Esophagus muscularis mucosa (tissue), 4 donors: ENCODE measurements at regions of chr7 and their contacts with region 1.

Region 1: GRCh38 chr7:873367-874002 is 2.9 kb upstream of the GET4 start:
- DNase-seq: peak; percentile 95
- H3K4me3 ChIP-seq: no peak overlapping the region
- H3K27ac ChIP-seq: peak overlapping the region; percentile 85 to 92 (median 92)
- H3K4me1 ChIP-seq: peaks cover 50 to 74% (median 67%) of the 10 kb centered on the region in 4 donors
- H3K27me3 ChIP-seq: no peaks in the 10 kb centered on the region
- CTCF ChIP-seq: peak in 2 of 3 experiments; percentile 97 to 99
- EP300 ChIP-seq: no peak
- POLR2A ChIP-seq: no peak

Region 2: DNA sequence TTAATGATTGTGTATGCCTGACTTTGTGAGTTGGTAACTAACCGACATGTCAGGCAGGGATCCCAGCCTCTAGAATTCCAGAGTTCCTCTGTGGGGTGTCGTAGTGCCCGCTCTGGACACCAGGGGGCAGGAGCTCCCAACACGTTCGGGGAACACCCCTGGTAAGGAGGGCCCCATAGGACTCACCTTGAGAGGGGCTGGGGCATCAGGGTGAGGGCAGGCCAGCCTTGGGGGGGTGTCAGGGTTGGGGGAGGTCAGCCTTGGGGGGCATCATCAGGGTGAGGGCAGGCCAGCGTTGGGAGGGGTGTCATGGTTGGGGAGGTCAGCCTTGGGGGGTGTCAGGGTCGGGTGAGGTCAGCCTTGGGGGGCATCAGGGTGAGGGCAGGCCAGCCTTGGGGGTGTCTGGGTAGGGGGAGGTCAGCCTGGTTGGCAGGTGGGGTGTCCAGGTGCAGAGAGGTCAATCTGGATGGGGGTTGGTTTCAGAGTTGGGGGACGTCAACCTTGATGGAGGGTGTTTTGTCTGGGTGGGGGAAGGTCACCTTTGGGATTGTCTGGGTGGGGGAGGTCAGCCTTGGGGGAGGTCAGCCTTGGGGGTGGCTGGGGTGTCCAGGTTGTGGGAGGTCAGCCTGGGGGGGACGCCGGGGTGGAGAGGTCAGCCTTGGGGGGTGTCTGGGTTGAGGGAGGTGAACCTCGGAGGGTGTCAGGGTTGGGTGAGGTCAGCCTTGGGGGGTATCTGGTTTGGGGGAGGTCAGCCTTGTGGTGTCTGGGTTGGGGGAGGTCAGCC is 86.8 kb before region 1 on chr7:
- intact Hi-C with region 1: loop called (anchors 2 kb)
- DNase-seq: no peak
- H3K4me3 ChIP-seq: no peak overlapping the region
- H3K27ac ChIP-seq: peak overlapping the region in 1 of 4 donors; percentile 62
- H3K4me1 ChIP-seq: peaks cover 11 to 32% (median 15%) of the 10 kb centered on the region in 4 donors
- H3K27me3 ChIP-seq: no peaks in the 10 kb centered on the region
- CTCF ChIP-seq: peak; percentile 93 to 98 (median 94)
- EP300 ChIP-seq: no peak
- POLR2A ChIP-seq: no peak

Region 3: DNA sequence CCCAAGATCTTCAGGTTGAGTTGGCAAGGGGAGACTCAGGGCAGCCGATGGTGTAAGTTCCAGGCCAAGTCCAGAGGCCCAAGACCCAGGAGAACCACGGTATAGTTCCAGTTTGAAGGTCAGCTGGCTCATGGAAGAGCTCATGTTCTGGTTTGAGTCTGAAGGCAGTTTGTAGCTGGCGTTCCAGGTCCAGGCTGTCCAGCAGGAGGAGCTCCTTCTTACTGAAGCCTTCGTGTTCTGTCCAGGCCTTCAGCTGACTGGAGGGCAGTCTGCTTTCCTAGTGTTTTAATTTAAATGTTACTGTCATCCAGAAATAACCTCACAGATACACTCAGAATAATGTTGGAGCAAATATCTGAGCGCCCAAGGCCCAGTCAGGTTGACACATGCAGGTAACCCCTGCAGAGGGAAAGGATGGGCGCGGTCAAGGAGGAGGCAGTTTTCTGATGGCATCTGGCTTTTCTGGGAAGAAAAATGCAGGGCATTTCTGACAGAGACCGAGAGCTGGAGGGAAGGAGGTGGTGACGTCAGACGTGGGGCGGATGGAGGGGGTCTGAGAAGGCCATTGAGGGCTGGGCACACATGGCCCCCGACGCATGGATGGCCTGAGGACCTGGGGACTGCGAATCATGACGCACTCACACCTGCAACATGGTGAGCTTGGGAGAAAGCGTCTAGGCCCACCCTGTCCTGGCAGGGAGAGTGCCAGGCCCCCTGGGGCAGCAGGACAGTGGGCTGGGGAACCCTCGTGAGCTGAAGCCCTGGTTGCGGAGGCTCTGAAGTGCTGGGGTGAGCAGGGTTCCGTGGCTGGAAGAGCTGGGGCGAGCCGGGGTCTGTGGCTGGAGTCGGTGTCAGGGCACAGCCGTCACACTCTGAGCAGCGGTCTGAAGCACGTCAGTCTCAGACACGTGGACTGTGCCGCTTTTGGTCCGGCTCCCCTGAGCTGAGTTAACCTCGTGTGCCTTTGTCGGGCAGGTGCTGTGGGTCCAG is 36.8 kb before region 1 on chr7:
- intact Hi-C with region 1: loop called (anchors 5 kb)
- DNase-seq: no peak
- H3K4me3 ChIP-seq: no peak overlapping the region
- H3K27ac ChIP-seq: peak overlapping the region; percentile 90 to 95 (median 92)
- H3K4me1 ChIP-seq: peaks cover 74 to 96% (median 85%) of the 10 kb centered on the region in 4 donors
- H3K27me3 ChIP-seq: no peaks in the 10 kb centered on the region
- CTCF ChIP-seq: peak; percentile 65 to 74 (median 73)
- EP300 ChIP-seq: no peak
- POLR2A ChIP-seq: no peak